ENCODE measurements at regions of chr17 and their contacts with region 1.

Region 1: DNA sequence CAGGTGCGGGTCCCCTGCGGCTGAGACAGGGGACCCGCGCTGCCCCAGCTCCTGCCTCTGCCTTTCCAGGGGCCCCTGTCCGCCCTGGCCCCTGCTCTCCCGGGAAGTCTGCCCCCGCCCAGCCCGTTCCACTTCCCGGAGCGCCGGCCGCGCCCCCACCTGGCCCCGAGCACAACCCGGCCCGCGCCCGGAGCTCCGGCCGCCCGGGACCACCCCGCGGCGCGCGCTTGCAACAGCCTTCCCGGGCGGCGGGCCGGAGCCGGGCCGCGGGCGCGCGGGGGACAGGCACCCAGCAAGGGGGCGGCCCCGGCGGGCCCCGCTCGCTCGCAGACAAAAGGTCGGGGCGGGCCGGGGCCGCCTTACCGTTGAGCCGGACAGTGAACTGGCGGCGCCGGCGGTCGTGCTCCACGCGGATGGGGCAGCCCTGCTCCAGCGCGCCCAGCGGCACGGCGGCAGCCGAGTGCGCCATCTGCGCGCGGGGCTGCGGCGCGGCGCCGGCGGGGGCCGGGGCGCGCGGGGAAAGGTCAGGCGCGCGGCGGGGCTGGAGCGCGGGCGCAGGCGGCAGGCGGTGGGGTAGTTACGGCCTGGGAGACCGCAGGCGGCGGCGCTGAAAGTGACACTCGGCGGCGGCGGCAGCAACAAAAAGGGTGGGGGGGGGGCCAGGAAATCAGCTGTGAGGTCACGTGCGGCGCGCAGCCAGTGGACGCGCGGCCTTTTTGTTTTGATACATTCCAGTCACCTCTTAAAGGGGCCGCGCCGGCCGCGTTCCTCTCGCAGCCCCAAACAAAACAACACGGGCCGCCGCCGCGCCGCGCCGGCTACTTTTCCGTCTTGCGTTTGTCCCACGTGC is at the start of gene NATD1:
- DNase-seq: peak; percentile 67 to 88 (median 73)
- ATAC-seq: peak; percentile 83 to 87
- H3K4me3 Mint-ChIP-seq: peak within 1 kb of the TSS; percentile 78 to 97 (median 88)
- H3K27ac Mint-ChIP-seq: peak within 1 kb of the TSS; percentile 83 to 97 (median 92)
- H3K4me1 Mint-ChIP-seq: peaks cover 19 to 48% (median 37%) of the 10 kb centered on the region in 4 donors
- H3K27me3 Mint-ChIP-seq: no peaks in the 10 kb centered on the region
- polyA plus RNA-seq, gene NATD1: 0.60 to 1.2 (median 0.99) TPM

Region 2: DNA sequence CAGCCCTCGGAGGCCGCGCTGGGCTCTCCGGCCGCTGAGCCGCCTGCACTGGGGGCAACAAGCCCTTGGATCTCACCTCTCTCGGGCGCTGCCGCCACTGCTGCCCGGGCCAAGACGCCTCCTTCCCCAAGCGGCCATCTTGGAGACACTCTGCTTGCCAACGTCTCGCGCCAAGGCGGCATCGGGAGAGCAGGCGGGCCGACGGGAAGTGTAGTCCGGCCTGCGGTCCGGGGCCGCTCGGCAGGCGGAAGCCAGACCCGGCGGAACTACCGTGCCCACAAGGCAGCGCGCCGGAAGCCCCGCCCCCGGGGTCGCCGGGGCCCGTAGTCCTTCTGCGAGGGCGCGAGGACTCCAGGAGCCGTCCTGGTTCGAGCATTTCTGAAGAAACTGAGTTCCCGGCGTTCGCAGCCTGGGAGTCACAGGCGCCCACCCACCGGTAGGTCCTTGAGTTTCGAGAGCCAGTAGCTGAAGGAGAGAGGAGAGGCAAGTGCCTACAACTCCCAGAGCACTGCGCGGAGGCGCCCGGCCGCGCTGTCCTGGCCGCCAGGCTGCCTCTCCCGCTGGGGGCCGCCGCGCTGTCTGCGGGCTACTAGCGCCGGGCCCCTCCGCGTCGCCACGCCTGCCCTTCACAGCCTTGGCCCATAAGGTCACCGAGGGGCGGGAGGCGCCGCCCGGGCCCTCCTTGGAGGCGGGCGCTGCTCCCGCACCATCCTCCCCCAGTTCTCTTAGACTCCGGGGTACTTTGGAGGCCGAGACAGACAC is 38.8 kb before region 1 on chr17 and contains the start of gene TMEM11:
- POLR2A ChIA-PET with region 1: interaction called, 22 read pairs
- DNase-seq: peak; percentile 91 to 96 (median 94)
- ATAC-seq: peak; percentile 91 to 94
- H3K4me3 Mint-ChIP-seq: peak within 1 kb of the TSS; percentile 87 to 94 (median 92)
- H3K27ac Mint-ChIP-seq: peak within 1 kb of the TSS; percentile 87 to 95 (median 93)
- H3K4me1 Mint-ChIP-seq: peaks cover 16 to 63% (median 55%) of the 10 kb centered on the region in 4 donors
- H3K27me3 Mint-ChIP-seq: no peaks in the 10 kb centered on the region
- polyA plus RNA-seq, gene TMEM11: 19.5 to 31.9 (median 26.2) TPM

Measured in naive thymus-derived CD8-positive, alpha-beta T cell (primary cell).